ENCODE measurements at regions of chr14 and their contacts with region 1.

Region 1: DNA sequence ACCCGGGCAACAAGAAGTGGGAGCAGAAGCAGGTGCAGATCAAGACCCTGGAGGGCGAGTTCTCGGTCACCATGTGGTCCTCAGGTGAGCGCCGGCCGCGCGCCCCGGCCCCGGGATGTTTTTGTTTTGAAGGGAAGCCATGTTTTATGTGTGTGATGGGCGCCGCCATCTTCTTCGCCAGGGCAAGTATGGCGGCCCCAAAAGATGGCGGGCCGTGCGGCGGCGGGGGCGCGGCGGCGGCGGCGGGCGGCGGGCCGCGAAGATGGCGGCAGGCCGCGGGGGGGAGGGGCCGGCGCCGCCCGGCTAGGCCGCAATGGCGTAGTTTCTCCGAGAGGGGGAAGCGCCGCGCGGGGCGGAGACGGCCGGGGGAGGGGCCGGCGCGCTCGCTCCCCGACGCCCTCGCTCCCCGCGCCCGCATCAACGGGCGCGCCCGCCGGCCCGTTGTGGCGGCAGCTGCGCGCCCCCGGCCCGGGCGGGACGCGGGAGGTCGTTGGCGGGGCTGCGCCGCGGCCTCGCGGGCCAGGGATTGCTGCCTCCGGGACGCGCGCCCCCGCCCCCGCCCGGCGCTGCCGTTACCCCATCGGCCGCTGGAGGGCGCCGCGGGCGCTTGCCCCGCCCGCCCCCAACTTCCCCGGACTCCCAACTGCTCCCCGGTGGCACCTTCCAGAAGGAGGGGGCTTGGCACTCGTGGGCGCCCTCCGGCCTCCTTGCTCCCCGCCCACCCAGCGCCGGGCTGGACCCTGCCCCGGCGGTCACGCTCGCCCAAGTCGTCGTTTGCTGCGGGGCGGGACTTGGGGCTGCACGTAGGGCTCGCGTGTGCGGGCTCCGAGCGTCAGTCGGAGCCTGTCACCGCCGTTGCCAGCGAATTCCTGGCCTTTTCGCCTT is 1.1 kb downstream of the YY1 start:
- DNase-seq: peak; percentile 53 to 83 (median 70)
- H3K4me3 ChIP-seq: peak overlapping the region; percentile 75 to 99 (median 96)
- H3K27ac ChIP-seq: peak overlapping the region; percentile 93 to 99 (median 98)
- H3K27me3 ChIP-seq: no peaks in the 10 kb centered on the region
- CTCF ChIP-seq: peak in 52 of 56 donors; percentile 3 to 81 (median 55)

Region 2: DNA sequence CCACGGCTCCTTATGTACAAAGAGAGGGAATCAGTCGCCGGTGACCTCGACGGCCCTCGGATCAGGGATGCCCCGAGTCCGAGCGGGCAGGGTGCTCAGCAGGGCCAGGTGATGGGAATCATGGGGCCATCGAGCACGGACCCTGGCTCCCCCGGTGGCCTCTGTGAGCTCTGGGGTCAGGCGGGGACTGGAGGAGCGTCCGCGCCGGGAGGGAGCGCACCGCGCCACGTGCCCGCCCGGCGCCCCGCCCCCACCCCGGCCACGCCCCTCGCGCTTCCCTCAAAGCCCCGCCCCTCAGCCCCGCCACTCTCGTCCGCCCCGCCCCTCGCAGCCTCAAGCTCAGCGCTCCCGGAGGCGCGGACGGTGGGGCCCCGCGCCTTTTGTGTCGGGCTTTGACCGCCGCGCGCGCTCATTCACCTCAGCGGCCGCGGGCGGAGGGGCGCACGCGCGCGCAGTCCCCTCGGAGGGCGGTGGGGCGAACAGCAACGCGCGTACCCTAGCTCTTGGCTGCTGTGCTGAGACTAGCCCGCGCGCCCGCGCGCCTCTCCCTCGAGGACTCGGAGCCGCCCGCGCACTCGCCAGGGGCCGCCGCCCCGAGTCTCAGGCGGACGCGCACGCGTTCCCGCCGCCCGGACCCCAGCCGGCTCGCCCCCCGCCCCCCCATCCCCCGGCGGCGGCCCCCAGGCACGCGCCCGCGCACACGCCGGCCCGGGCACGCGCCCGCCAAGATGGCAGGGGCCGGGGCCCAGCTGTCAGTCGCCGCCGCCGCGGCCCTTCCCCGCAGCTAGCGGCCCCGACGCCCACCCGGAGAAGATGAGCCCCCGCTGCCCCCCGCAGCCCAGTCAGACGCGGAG is 268.8 kb before region 1 on chr14:
- intact Hi-C with region 1: loop called in 1 of 2 experiments (anchors 1 kb)
- DNase-seq: peak; percentile 67 to 85 (median 78)
- H3K4me3 ChIP-seq: peak overlapping the region; percentile 40 to 92 (median 81)
- H3K27ac ChIP-seq: peak overlapping the region in 48 of 59 donors; percentile 38 to 90 (median 75)
- H3K27me3 ChIP-seq: no peaks in the 10 kb centered on the region
- CTCF ChIP-seq: peak in 24 of 56 donors; percentile 5 to 35 (median 21)

Region 3: DNA sequence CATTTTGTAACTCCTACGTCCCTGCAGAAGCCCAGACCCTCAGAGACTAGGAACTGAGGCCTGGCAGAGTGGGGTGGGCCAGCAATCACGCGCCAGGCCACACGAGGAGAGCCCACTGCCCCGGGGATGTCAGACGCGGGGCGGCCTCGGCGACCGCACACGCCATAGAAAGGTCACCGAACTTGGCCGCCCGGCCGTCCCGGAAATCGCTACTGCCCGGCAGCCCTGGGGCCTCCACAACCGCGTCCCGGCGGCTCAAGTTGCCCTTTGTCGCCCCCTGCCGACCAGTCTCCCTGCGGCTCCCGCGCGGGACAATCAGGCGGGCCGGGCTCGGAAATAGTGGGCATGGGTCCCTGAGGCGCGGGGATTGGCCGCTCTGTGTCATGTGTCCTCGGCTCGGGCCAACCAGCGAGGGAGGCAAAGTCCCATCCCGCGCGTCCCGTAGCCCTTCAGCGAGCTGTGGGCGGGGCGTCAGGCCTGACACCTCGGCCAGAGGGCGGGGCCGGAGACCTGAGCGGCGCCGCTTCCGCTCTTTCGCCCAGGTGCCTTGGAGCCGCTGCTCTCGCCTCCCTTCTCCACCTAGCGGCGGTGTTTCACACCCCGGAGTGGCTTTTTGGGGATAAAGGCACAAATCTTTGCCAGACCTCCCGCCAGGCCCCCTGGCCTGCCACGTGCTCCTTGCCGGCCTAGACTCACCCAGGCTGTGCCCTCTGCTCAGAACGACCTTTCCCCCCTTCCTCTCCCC is 47.2 kb before region 1 on chr14:
- intact Hi-C with region 1: loop called (anchors 2 to 5 kb)
- DNase-seq: peak; percentile 97 to 100 (median 98)
- H3K4me3 ChIP-seq: peak overlapping the region; percentile 46 to 77 (median 64)
- H3K27ac ChIP-seq: peak overlapping the region; percentile 80 to 99 (median 92)
- H3K27me3 ChIP-seq: no peaks in the 10 kb centered on the region
- CTCF ChIP-seq: peak; percentile 75 to 100 (median 97)

Region 4: DNA sequence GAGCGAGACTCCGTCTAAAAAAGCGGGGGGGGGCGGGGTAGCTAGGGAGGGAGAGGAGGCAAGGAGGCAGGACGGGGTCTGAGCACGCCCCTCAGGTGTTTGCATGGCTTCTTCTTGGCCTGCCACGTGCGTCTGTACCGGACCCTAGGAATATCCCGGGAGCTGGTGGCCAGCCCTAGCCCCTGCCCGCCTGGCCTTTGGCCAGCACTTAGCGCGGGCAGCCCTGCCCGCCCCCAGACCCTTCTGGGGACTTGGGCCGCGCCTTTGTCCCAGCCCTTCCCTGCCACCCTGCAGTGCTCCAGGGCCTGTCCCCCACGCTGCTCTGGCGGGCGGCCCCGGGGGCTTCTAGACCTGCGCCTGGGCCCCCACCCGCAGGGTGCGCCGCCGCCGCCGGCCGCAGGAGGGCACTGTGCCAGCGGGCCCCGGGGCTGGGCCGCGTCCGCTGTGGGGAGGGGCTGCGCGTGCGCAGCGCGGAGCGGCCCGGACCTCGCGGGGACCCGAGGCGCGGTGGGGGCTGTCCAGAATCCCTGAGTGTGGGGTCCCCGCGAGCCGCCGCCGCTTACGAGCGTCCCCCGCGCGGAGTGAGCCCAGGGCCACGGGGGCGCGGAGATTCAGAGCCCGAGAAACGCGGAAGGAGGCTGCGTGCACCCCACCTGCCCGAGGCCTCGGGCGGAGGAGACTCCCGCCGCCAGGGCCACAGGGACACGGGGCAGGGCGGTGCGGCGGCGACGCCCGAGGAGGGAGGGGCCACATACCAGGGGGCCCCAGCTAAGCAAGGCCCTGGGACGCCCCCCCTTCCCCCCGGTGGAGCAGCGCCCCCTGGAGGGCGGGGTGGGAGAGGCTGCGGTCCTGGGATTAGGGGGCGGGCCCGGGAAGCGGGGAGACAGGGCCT is 45.2 kb after region 1 on chr14:
- intact Hi-C with region 1: loop called in 1 of 2 experiments (anchors 2 kb)
- DNase-seq: peak in 6 of 10 donors; percentile 41 to 84 (median 60)
- H3K4me3 ChIP-seq: peak overlapping the region; percentile 72 to 97 (median 86)
- H3K27ac ChIP-seq: peak overlapping the region; percentile 49 to 98 (median 90)
- H3K27me3 ChIP-seq: no peaks in the 10 kb centered on the region
- CTCF ChIP-seq: peak in 55 of 56 donors; percentile 53 to 90 (median 75)

Region 5: GRCh38 chr14:100306420-100307219 is 66.5 kb after region 1 on chr14 and contains the start of gene SLC25A29:
- intact Hi-C with region 1: loop called (anchors 2 to 5 kb)
- DNase-seq: peak; percentile 84 to 97 (median 91)
- H3K4me3 ChIP-seq: peak within 1 kb of the TSS; percentile 73 to 99 (median 93)
- H3K27ac ChIP-seq: peak within 1 kb of the TSS; percentile 25 to 98 (median 88)
- H3K27me3 ChIP-seq: no peaks in the 10 kb centered on the region
- CTCF ChIP-seq: peak in 21 of 56 donors; percentile 4 to 59 (median 16)
- total RNA-seq, gene SLC25A29: 58.8 to 204 (median 102) TPM

Region 6: DNA sequence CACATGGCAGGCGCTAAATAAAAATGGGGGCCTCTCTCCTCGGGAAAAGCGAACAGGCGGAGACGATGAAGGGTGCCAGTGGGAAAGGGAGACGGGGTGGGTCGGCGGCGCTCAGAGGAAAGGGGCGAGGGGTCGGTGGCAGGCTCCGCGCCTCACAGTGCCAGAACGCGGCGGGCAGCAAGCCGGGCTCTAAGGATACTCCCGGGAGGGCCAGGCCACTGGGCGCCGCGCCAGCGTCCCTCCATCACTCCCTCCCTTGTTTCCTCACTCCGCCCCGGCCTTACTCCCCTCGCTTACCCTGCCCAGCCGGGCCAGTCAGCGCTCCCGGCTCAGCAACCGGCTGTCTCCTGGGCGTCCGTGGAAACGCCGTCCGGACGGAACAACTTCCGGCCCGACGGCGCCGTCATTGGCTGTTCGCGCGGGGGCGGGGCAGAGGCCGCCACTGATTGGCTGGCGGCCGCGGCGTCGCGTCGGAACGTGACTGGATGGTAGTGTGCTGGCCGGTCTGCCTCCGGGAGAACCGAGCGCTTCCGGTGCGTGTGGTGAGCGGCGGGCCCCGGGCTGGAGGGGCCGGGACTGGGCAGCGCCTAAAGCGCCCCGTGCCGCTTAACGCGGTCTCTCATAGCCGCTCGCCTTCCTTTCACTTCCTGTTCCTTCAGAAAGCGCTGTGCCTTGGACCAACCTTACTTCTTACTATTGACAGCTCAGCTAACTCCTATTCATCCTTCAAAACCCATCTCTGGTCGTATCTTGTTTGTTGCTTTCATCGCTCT is 136.1 kb after region 1 on chr14:
- intact Hi-C with region 1: loop called (anchors 2 kb)
- DNase-seq: peak; percentile 80 to 95 (median 89)
- H3K4me3 ChIP-seq: peak within 1 kb of the TSS; percentile 62 to 98 (median 88)
- H3K27ac ChIP-seq: peak within 1 kb of the TSS in 58 of 59 donors; percentile 13 to 95 (median 82)
- H3K27me3 ChIP-seq: no peaks in the 10 kb centered on the region
- CTCF ChIP-seq: peak in 44 of 56 donors; percentile 0 to 66 (median 38)